Naive thymus-derived CD4-positive, alpha-beta T cell (primary cell): ENCODE measurements at regions of chr4 and their contacts with region 1.

Region 1: GRCh38 chr4:163922302-163922701 is 427.8 kb downstream of the TMA16 start:
- DNase-seq: peak in 2 of 9 donors; percentile 1 to 7
- ATAC-seq: no peak
- H3K4me3 ChIP-seq: no peak overlapping the region
- H3K4me3 Mint-ChIP-seq: peak overlapping the region in 1 of 10 donors; percentile 26
- H3K27ac ChIP-seq: no peak overlapping the region
- H3K27ac Mint-ChIP-seq: no peak overlapping the region
- H3K4me1 ChIP-seq: no peaks in the 10 kb centered on the region
- H3K4me1 Mint-ChIP-seq: peaks cover 0 to 11% (median 0%) of the 10 kb centered on the region in 7 donors
- H3K27me3 ChIP-seq: no peaks in the 10 kb centered on the region
- H3K27me3 Mint-ChIP-seq: no peaks in the 10 kb centered on the region

Region 2: GRCh38 chr4:163895378-163896005 is 26.8 kb before region 1 on chr4:
- CTCF ChIA-PET with region 1: no interaction called
- POLR2A ChIA-PET with region 1: no interaction called
- intact Hi-C with region 1: loop called in 1 of 2 experiments (anchors 2 kb)
- DNase-seq: peak in 7 of 9 donors; percentile 25 to 84 (median 43)
- ATAC-seq: peak; percentile 71
- H3K4me3 ChIP-seq: no peak overlapping the region
- H3K4me3 Mint-ChIP-seq: peak overlapping the region in 8 of 10 donors; percentile 24 to 65 (median 51)
- H3K27ac ChIP-seq: no peak overlapping the region
- H3K27ac Mint-ChIP-seq: peak overlapping the region in 7 of 9 donors; percentile 22 to 85 (median 63)
- H3K4me1 ChIP-seq: peaks cover 0 to 5% of the 10 kb centered on the region in 2 donors
- H3K4me1 Mint-ChIP-seq: peaks cover 0 to 43% (median 27%) of the 10 kb centered on the region in 7 donors
- H3K27me3 ChIP-seq: no peaks in the 10 kb centered on the region
- H3K27me3 Mint-ChIP-seq: peaks cover 0 to 7% (median 0%) of the 10 kb centered on the region in 5 donors